ENCODE measurements at regions of chr1 and their contacts with region 1.

Region 1: GRCh38 chr1:230310381-230311163 is 115.6 kb downstream of the PGBD5 start:
- DNase-seq: peak; percentile 82
- ATAC-seq: peak; percentile 87
- H3K4me3 ChIP-seq: no peak overlapping the region
- H3K4me3 Mint-ChIP-seq: no peak overlapping the region
- H3K27ac ChIP-seq: no peak overlapping the region
- H3K27ac Mint-ChIP-seq: peak overlapping the region; percentile 8
- H3K4me1 ChIP-seq: peaks cover 3 to 6% of the 10 kb centered on the region in 2 donors
- H3K4me1 Mint-ChIP-seq: peaks cover 19% of the 10 kb centered on the region
- H3K27me3 ChIP-seq: no peaks in the 10 kb centered on the region
- H3K27me3 Mint-ChIP-seq: peaks cover 8% of the 10 kb centered on the region
- CTCF ChIP-seq: peak; percentile 97

Region 2: GRCh38 chr1:228664399-228664914 is 1646.1 kb before region 1 on chr1:
- CTCF ChIA-PET with region 1: no interaction called
- POLR2A ChIA-PET with region 1: no interaction called
- intact Hi-C with region 1: loop called (anchors 10 kb)
- DNase-seq: peak; percentile 79
- ATAC-seq: peak; percentile 43
- H3K4me3 ChIP-seq: no peak overlapping the region
- H3K4me3 Mint-ChIP-seq: no peak overlapping the region
- H3K27ac ChIP-seq: no peak overlapping the region
- H3K27ac Mint-ChIP-seq: no peak overlapping the region
- H3K4me1 ChIP-seq: no peaks in the 10 kb centered on the region
- H3K4me1 Mint-ChIP-seq: no peaks in the 10 kb centered on the region
- H3K27me3 ChIP-seq: peaks cover 0 to 8% (median 2%) of the 10 kb centered on the region in 4 experiments
- H3K27me3 Mint-ChIP-seq: peaks cover 22% of the 10 kb centered on the region
- CTCF ChIP-seq: peak; percentile 95

Region 3: DNA sequence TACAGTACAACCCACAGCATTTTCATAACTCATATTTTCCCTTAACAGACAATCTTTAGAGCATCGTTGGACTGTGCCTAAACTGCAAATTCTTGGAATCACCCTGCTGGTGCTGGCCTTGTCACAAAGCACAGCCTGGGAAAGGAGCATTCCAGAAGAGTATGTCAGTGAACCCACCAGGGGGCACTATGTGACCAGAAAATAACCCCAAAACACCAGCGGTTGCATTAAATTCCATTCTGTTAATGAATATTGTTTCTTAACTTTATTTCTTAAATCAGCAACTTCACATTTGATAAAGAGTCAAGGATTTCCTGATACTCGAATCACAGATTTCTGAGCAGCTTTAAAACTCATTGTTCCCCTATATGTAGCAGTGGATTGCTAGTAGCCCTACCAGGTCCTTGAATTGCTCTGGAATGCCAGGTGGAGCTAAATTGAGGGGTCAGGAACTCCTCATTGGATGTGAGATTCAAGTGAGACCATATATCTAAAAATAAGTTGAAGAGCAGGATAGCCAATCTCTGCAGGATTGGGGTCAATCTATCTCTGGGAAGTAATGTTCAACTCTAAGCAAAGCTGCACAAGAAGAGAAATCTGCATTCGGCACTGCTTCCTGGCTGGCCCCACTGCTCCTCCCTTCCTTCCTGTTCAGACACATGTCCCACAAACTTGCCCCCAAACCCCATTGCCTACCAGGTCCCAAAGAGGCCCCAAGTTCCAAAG is 1052.4 kb before region 1 on chr1:
- CTCF ChIA-PET with region 1: interaction called, 9 read pairs
- POLR2A ChIA-PET with region 1: no interaction called
- intact Hi-C with region 1: loop called (anchors 1 kb)
- DNase-seq: peak; percentile 77
- ATAC-seq: peak; percentile 76
- H3K4me3 ChIP-seq: no peak overlapping the region
- H3K4me3 Mint-ChIP-seq: no peak overlapping the region
- H3K27ac ChIP-seq: no peak overlapping the region
- H3K27ac Mint-ChIP-seq: no peak overlapping the region
- H3K4me1 ChIP-seq: peaks cover 10 to 16% of the 10 kb centered on the region in 2 donors
- H3K4me1 Mint-ChIP-seq: peaks cover 13% of the 10 kb centered on the region
- H3K27me3 ChIP-seq: no peaks in the 10 kb centered on the region
- H3K27me3 Mint-ChIP-seq: peaks cover 3% of the 10 kb centered on the region
- CTCF ChIP-seq: peak; percentile 94

Region 4: DNA sequence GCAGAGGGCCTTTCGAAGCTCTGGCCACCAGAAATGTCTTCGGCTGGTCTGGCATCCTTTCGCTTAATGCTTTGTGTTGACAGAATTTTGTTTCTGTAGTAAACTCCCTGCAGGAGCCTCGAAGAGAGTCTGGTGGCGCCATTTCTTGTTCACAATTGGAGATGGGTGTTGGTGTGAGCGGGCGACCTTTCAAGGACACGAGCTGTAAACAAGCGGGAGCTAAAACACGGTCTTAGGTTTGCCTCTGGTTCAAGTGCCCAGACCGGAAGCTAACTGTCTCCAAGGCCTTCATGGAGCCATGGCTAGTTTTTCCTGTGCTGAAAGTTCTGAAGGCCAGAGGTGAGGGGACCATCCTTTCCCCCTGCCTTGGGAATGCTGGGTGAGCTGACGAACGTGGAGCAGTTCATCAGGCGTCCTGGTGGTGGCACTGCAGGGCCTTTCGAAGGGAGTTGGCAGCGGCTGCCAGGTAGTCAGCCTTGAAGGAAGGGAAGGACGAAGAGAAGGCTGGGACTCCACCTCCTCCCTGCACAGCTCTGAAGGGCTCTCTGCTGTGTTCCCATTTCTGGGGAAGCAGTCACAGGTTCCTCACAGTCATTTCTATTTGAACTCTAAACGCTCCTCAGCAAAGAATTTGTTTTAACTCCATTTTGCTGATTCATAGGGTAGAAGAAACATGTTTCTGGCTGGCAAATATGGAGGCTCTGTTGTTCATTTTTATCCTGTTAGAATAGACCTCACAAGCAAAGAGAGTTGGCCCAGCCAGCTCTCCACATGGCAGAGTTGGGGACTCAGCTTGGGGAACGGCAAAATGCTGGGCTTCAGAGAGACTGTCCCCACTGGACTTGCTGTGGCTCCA is 649.3 kb before region 1 on chr1:
- CTCF ChIA-PET with region 1: interaction called, 265 read pairs
- POLR2A ChIA-PET with region 1: no interaction called
- intact Hi-C with region 1: loop called (anchors 1 kb)
- DNase-seq: peak; percentile 82
- ATAC-seq: peak; percentile 92
- H3K4me3 ChIP-seq: no peak overlapping the region
- H3K4me3 Mint-ChIP-seq: no peak overlapping the region
- H3K27ac ChIP-seq: no peak overlapping the region
- H3K27ac Mint-ChIP-seq: peak overlapping the region; percentile 34
- H3K4me1 ChIP-seq: peaks cover 19 to 22% of the 10 kb centered on the region in 2 donors
- H3K4me1 Mint-ChIP-seq: peaks cover 7% of the 10 kb centered on the region
- H3K27me3 ChIP-seq: no peaks in the 10 kb centered on the region
- H3K27me3 Mint-ChIP-seq: no peaks in the 10 kb centered on the region
- CTCF ChIP-seq: peak; percentile 92

Region 5: GRCh38 chr1:229714964-229715603 is 595.5 kb before region 1 on chr1:
- CTCF ChIA-PET with region 1: interaction called, 41 read pairs
- POLR2A ChIA-PET with region 1: no interaction called
- intact Hi-C with region 1: loop called (anchors 1 kb)
- DNase-seq: peak; percentile 61
- ATAC-seq: no peak
- H3K4me3 ChIP-seq: no peak overlapping the region
- H3K4me3 Mint-ChIP-seq: no peak overlapping the region
- H3K27ac ChIP-seq: no peak overlapping the region
- H3K27ac Mint-ChIP-seq: peak overlapping the region; percentile 41
- H3K4me1 ChIP-seq: no peaks in the 10 kb centered on the region
- H3K4me1 Mint-ChIP-seq: no peaks in the 10 kb centered on the region
- H3K27me3 ChIP-seq: peaks cover 0 to 3% (median 0%) of the 10 kb centered on the region in 4 experiments
- H3K27me3 Mint-ChIP-seq: peaks cover 4% of the 10 kb centered on the region
- CTCF ChIP-seq: peak; percentile 66

Region 6: GRCh38 chr1:229856009-229856650 is 454.4 kb before region 1 on chr1:
- CTCF ChIA-PET with region 1: no interaction called
- POLR2A ChIA-PET with region 1: no interaction called
- intact Hi-C with region 1: loop called (anchors 1 kb)
- DNase-seq: peak; percentile 82
- ATAC-seq: peak; percentile 99
- H3K4me3 ChIP-seq: peak overlapping the region; percentile 19 to 67 (median 46)
- H3K4me3 Mint-ChIP-seq: peak overlapping the region; percentile 96
- H3K27ac ChIP-seq: peak overlapping the region; percentile 85 to 90
- H3K27ac Mint-ChIP-seq: peak overlapping the region; percentile 97
- H3K4me1 ChIP-seq: peaks cover 34 to 35% of the 10 kb centered on the region in 2 donors
- H3K4me1 Mint-ChIP-seq: peaks cover 29% of the 10 kb centered on the region
- H3K27me3 ChIP-seq: no peaks in the 10 kb centered on the region
- H3K27me3 Mint-ChIP-seq: no peaks in the 10 kb centered on the region
- CTCF ChIP-seq: no peak

Region 7: GRCh38 chr1:230263568-230264195 is 46.9 kb before region 1 on chr1:
- CTCF ChIA-PET with region 1: no interaction called
- POLR2A ChIA-PET with region 1: no interaction called
- intact Hi-C with region 1: no loop called
- DNase-seq: no peak
- ATAC-seq: no peak
- H3K4me3 ChIP-seq: no peak overlapping the region
- H3K4me3 Mint-ChIP-seq: no peak overlapping the region
- H3K27ac ChIP-seq: no peak overlapping the region
- H3K27ac Mint-ChIP-seq: peak overlapping the region; percentile 20
- H3K4me1 ChIP-seq: peaks cover 5 to 9% of the 10 kb centered on the region in 2 donors
- H3K4me1 Mint-ChIP-seq: peaks cover 17% of the 10 kb centered on the region
- H3K27me3 ChIP-seq: no peaks in the 10 kb centered on the region
- H3K27me3 Mint-ChIP-seq: no peaks in the 10 kb centered on the region
- CTCF ChIP-seq: no peak